ENCODE measurements at regions of chr5 and their contacts with region 1.

Region 1: DNA sequence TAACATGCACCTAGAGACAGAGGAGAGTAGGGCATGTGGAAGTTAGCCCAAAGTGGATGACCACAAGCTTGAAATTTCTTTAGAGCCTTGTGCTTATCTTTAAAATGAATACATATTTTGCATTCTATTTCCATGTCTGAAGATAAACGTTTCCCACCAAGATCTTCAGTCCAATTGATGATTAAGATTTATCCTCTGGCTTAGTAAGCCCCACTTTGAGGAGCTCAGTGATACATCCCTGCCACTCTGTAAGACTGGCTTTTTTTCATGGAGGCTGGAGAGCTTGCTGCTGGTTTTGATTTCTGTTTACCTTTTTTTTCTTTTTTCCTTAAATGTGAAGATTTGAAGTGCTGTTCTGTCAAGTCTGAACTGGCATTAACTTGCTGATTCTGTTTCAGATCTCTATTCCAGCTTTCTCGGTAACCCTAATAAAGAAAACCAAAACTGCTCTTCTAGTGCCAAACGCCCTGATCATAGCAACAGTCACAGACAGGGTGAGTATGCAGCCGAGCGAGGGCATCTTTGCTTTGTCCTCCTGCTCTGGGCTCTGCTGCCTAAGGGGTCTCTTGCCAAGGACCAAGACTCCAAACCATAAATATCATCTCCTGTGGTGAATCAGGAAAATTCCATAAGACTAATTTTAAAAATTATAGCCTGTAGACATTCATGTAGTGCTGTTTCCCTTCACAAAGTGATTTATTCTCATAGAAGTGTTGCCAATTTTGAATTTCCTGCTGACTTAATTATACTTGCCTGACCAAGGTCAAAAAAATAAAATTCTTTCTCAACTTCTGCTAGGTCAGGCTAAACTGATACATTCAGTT is 54.3 kb downstream of the GRAMD2B start:
- DNase-seq: no peak
- ATAC-seq: no peak
- H3K4me3 ChIP-seq: no peak overlapping the region
- H3K27ac ChIP-seq: peak overlapping the region in 3 of 10 donors; percentile 14 to 49 (median 28)
- H3K4me1 ChIP-seq: peaks cover 0 to 34% (median 4%) of the 10 kb centered on the region in 9 donors
- H3K27me3 ChIP-seq: no peaks in the 10 kb centered on the region
- CTCF ChIP-seq: no peak

Region 2: DNA sequence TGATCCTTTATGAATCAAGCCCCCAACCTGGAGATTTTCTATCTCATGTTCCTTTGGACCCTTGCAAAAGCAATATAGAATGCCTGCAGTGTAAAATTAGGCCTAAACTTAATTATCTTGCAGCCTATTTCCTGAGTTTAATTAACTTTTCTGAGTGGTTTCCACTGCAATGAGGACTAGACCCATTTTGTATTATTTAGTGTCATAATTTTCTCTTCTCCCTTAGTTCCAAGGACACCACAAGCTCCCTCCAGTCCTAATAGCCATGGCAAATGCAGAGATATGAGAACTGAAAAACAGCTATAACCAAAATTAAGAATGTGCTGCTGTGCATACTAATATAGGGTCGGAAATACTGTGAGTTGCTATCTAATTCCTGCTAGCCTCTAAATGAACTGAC is 145.2 kb before region 1 on chr5:
- intact Hi-C with region 1: no loop called
- DNase-seq: no peak
- ATAC-seq: no peak
- H3K4me3 ChIP-seq: no peak overlapping the region
- H3K27ac ChIP-seq: no peak overlapping the region
- H3K4me1 ChIP-seq: no peaks in the 10 kb centered on the region
- H3K27me3 ChIP-seq: no peaks in the 10 kb centered on the region
- CTCF ChIP-seq: no peak

Region 3: GRCh38 chr5:126395198-126395597 is 82.3 kb before region 1 on chr5:
- intact Hi-C with region 1: no loop called
- DNase-seq: no peak
- ATAC-seq: no peak
- H3K4me3 ChIP-seq: no peak overlapping the region
- H3K27ac ChIP-seq: no peak overlapping the region
- H3K4me1 ChIP-seq: no peaks in the 10 kb centered on the region
- H3K27me3 ChIP-seq: no peaks in the 10 kb centered on the region
- CTCF ChIP-seq: no peak

Region 4: DNA sequence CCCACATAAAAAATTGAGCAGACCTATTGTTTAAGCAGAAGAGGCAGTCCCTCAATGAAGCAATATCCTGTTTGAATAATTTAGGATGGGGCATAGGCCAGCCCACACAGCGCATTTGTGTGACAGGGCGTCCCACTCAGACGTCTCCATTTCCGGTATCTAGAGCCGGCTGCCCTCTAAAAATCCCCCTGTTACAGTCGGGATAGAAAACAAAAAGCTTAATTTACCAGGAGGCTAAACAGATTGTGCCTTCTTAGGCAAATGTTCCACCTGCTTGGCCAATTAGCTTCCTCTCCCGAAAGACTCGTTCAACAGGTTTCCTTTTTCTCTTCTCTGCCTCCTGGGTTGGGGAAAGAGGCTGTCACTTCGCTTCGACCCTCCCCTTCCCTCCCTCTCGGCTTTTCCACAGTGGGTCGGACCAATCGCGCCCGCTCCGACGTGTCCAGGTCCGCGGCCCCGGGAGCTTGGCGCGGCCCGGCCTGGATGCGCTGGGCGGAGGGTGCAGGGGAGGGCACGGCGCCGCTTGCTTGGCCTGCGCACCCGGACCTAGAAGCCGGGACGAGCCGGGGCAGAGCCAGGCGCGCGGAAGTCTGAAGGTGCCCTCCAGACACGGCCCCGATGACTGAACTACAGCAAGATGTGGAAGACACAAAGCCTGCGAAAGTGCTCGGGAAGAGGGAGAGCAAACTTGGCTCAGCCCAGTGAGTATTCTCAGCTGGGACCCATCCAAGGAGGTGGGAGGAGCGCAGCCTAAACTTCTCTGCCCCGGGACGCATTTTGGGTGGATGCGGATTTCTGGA is 54.3 kb before region 1 on chr5 and contains the start of gene GRAMD2B:
- intact Hi-C with region 1: loop called in 1 of 10 experiments (anchors 2 kb)
- DNase-seq: peak; percentile 86 to 89
- ATAC-seq: peak; percentile 96 to 99 (median 98)
- H3K4me3 ChIP-seq: peak within 1 kb of the TSS; percentile 56 to 88 (median 65)
- H3K27ac ChIP-seq: peak within 1 kb of the TSS; percentile 87 to 97 (median 94)
- H3K4me1 ChIP-seq: peaks cover 0 to 35% (median 23%) of the 10 kb centered on the region in 9 donors
- H3K27me3 ChIP-seq: no peaks in the 10 kb centered on the region
- CTCF ChIP-seq: no peak
- total RNA-seq, gene GRAMD2B: 29.1 to 47.3 (median 35.3) TPM